Heart left ventricle (tissue), 16 donors: ENCODE measurements at regions of chr10 and their contacts with region 1.

Region 1: DNA sequence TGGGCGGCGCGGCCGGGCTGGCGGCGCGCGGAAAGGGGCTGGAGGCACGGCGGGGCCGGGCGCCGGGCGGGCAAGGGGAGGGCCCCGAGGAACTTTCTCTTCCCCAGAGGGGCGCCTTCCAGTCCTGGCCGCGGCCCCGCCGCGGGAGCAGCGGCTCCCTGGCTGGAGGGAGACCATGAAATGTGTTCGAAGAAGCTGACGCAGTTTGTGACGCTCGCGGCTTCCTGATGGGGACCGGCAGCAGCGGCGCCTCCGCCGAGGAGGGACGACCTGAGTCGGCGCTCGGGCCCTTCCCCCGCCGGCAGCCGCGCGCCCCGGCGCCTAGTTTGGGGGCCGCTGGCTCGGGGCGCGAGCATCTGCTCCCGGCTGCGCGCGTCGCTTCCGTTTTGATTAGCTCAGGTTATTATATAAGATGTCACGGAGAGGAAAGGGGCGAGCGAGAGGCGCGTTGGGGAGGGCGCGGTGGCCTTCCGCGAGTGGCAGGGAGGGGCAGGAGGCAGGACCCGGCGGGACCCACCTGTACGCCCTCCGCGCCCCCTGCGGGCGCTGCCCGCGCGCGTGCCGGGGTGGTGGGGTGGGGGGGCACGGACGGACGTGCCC is 57.1 kb upstream of the PCGF5 start:
- DNase-seq: peak; percentile 71 to 86 (median 82)
- ATAC-seq: peak; percentile 11 to 68 (median 61)
- H3K4me3 ChIP-seq: peak overlapping the region; percentile 58 to 98 (median 93)
- H3K27ac ChIP-seq: peak overlapping the region; percentile 91 to 99 (median 96)
- H3K4me1 ChIP-seq: peaks cover 0 to 41% (median 15%) of the 10 kb centered on the region in 12 donors
- H3K27me3 ChIP-seq: no peaks in the 10 kb centered on the region
- CTCF ChIP-seq: peak in 1 of 12 donors; percentile 18
- POLR2A ChIP-seq: peak in 1 of 2 donors; percentile 36

Region 2: GRCh38 chr10:89458291-89458690 is 1705.1 kb before region 1 on chr10:
- intact Hi-C with region 1: no loop called
- DNase-seq: no peak
- ATAC-seq: peak; percentile 48 to 82 (median 78)
- H3K4me3 ChIP-seq: no peak overlapping the region
- H3K27ac ChIP-seq: peak overlapping the region in 9 of 12 donors; percentile 0 to 72 (median 44)
- H3K4me1 ChIP-seq: peaks cover 0 to 20% (median 12%) of the 10 kb centered on the region in 12 donors
- H3K27me3 ChIP-seq: no peaks in the 10 kb centered on the region
- CTCF ChIP-seq: no peak
- POLR2A ChIP-seq: no peak

Region 3: GRCh38 chr10:90470966-90471365 is 692.4 kb before region 1 on chr10:
- intact Hi-C with region 1: no loop called
- DNase-seq: no peak
- ATAC-seq: no peak
- H3K4me3 ChIP-seq: no peak overlapping the region
- H3K27ac ChIP-seq: no peak overlapping the region
- H3K4me1 ChIP-seq: no peaks in the 10 kb centered on the region
- H3K27me3 ChIP-seq: no peaks in the 10 kb centered on the region
- CTCF ChIP-seq: no peak
- POLR2A ChIP-seq: no peak

Region 4: GRCh38 chr10:90912174-90912573 is 251.2 kb before region 1 on chr10:
- intact Hi-C with region 1: loop called in 1 of 10 experiments (anchors 10 kb)
- DNase-seq: no peak
- ATAC-seq: peak in 1 of 4 donors; percentile 2
- H3K4me3 ChIP-seq: no peak overlapping the region
- H3K27ac ChIP-seq: peak overlapping the region in 7 of 12 donors; percentile 1 to 36 (median 24)
- H3K4me1 ChIP-seq: peaks cover 0 to 6% (median 0%) of the 10 kb centered on the region in 12 donors
- H3K27me3 ChIP-seq: no peaks in the 10 kb centered on the region
- CTCF ChIP-seq: no peak
- POLR2A ChIP-seq: peak in 1 of 2 donors; percentile 30

Region 5: DNA sequence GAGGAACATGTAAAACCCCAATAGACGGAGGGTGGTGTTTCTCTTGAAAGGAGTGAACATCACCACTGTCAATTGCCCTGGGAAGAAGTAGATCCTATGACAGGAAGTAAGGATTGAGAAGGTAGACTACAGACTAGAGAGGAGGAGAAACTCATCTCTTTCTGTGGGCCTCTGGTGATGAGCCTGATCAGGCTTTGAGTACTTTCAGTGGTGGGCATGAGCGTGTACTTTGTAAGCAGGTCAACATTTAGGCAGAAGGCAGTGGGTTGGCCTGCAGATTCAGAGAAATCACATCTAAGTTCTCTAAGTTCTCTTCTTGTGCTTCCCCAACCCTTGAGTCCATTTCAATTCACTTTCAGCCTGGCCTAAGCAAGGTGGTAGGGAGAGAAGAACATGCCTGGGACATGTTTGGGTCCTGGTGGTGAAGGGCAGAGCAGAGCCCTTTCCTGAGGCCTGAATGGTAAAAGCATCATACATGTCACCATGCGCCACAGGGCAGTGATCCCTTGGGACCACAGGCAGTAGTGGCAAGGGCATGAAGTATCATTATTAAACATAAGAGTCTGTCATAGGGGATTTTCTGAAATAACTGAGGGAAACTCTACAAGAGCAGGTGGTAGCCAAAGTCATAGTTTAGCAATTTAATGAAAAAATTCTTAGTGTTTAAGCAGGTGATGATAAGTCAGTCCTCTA is 186.1 kb before region 1 on chr10:
- intact Hi-C with region 1: no loop called
- DNase-seq: no peak
- ATAC-seq: no peak
- H3K4me3 ChIP-seq: no peak overlapping the region
- H3K27ac ChIP-seq: peak overlapping the region in 1 of 12 donors; percentile 2
- H3K4me1 ChIP-seq: no peaks in the 10 kb centered on the region
- H3K27me3 ChIP-seq: no peaks in the 10 kb centered on the region
- CTCF ChIP-seq: no peak
- POLR2A ChIP-seq: no peak

Region 6: GRCh38 chr10:91043173-91043910 is 120.0 kb before region 1 on chr10:
- intact Hi-C with region 1: loop called in 3 of 10 experiments (anchors 5 to 10 kb)
- DNase-seq: peak in 1 of 5 donors; percentile 10
- ATAC-seq: peak; percentile 79 to 91 (median 89)
- H3K4me3 ChIP-seq: no peak overlapping the region
- H3K27ac ChIP-seq: no peak overlapping the region
- H3K4me1 ChIP-seq: peaks cover 0 to 21% (median 0%) of the 10 kb centered on the region in 12 donors
- H3K27me3 ChIP-seq: no peaks in the 10 kb centered on the region
- CTCF ChIP-seq: peak; percentile 22 to 66 (median 56)
- POLR2A ChIP-seq: no peak

Region 7: DNA sequence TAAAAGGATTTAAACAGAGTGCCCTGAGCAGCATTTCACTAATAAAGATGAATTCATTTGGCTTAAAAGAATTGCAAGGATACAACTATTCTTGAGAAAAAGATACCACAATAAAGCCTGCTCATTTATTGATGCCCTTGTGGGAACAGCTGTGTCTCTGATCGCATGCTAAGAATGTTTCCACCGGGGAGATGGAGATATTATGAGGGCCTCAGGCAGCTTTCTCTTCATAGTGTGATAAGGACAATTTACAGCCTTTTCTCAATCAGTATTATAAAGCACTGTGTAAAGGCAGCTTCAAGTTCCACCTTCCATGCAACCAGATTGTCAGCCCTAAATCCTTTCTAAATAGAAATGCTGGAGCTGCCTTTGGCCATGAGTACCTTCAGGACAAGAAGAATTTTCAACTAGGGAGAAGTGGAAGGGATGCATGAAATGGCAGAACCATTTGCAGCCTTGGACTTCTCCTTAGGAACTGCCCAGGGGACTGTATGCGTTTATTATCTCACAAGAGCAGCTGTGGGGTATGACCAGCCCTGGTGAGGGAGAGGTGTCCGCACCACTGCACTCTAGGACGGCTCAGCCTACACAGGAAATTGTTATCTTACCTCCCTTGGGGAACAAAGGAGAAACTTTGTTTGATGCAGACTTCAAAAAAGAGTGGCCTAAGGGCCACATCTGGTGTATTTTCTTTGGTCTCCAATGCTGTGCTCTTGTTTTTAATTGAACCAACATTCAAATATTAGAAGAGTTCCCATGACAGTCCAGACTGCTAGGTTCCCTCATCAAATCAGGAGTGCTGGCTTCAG is 59.8 kb before region 1 on chr10:
- intact Hi-C with region 1: loop called in 2 of 10 experiments (anchors 10 kb)
- DNase-seq: no peak
- ATAC-seq: no peak
- H3K4me3 ChIP-seq: no peak overlapping the region
- H3K27ac ChIP-seq: no peak overlapping the region
- H3K4me1 ChIP-seq: peaks cover 0 to 12% (median 0%) of the 10 kb centered on the region in 12 donors
- H3K27me3 ChIP-seq: no peaks in the 10 kb centered on the region
- CTCF ChIP-seq: no peak
- POLR2A ChIP-seq: no peak

Region 8: GRCh38 chr10:91220194-91220953 is 57.0 kb after region 1 on chr10 and contains the start of gene PCGF5:
- intact Hi-C with region 1: loop called (anchors 1 to 10 kb)
- DNase-seq: peak; percentile 91 to 97 (median 94)
- ATAC-seq: peak; percentile 95 to 100 (median 99)
- H3K4me3 ChIP-seq: peak within 1 kb of the TSS; percentile 72 to 99 (median 92)
- H3K27ac ChIP-seq: peak within 1 kb of the TSS; percentile 75 to 98 (median 92)
- H3K4me1 ChIP-seq: peaks cover 0 to 57% (median 41%) of the 10 kb centered on the region in 12 donors
- H3K27me3 ChIP-seq: no peaks in the 10 kb centered on the region
- CTCF ChIP-seq: peak; percentile 18 to 54 (median 36)
- POLR2A ChIP-seq: peak in 1 of 2 donors; percentile 79
- total RNA-seq, gene PCGF5: 54.2 to 90.7 (median 85.6) TPM

Region 9: GRCh38 chr10:91271886-91272285 is 108.5 kb after region 1 on chr10:
- intact Hi-C with region 1: no loop called
- DNase-seq: no peak
- ATAC-seq: no peak
- H3K4me3 ChIP-seq: no peak overlapping the region
- H3K27ac ChIP-seq: no peak overlapping the region
- H3K4me1 ChIP-seq: no peaks in the 10 kb centered on the region
- H3K27me3 ChIP-seq: no peaks in the 10 kb centered on the region
- CTCF ChIP-seq: no peak
- POLR2A ChIP-seq: no peak